Right ventricle myocardium inferior (tissue), 1 donor: ENCODE measurements at regions of chr3 and their contacts with region 1.

Region 1: DNA sequence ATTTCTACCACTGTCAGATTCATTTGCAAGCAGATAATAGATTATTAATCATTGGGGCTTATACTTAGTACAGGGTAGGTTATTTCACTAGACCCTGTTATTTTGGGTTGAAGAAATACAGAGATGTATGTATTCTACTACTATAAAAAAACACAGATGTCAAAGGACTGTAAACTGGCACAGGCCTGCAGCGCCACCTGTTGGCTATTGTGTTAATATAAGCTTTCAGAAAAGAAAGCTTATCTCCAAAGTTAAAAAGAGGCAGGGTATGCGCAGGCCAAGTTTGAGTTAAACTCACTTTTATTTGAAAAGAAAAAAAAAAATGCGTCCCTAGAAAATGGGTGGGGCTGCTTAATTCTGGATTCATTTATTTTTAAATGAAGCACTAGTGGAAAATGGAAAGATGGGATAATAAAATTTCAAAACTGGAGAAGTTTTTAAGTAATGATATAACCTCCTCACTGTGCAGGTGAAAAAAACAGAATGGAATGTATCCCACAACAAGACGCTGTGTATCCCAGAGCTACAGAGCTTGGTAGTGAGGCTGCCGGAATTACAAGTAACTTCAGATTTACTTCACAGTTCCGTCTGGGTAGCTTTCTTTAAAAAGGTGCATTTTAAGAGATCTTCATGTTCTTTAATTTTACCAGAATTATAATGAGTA is 407.2 kb upstream of the TGFBR2 start:
- DNase-seq: peak; percentile 91
- ATAC-seq: peak; percentile 58

Region 2: GRCh38 chr3:30112902-30113484 is 86.2 kb before region 1 on chr3:
- intact Hi-C with region 1: loop called (anchors 1 kb)
- DNase-seq: no peak
- ATAC-seq: no peak

Region 3: DNA sequence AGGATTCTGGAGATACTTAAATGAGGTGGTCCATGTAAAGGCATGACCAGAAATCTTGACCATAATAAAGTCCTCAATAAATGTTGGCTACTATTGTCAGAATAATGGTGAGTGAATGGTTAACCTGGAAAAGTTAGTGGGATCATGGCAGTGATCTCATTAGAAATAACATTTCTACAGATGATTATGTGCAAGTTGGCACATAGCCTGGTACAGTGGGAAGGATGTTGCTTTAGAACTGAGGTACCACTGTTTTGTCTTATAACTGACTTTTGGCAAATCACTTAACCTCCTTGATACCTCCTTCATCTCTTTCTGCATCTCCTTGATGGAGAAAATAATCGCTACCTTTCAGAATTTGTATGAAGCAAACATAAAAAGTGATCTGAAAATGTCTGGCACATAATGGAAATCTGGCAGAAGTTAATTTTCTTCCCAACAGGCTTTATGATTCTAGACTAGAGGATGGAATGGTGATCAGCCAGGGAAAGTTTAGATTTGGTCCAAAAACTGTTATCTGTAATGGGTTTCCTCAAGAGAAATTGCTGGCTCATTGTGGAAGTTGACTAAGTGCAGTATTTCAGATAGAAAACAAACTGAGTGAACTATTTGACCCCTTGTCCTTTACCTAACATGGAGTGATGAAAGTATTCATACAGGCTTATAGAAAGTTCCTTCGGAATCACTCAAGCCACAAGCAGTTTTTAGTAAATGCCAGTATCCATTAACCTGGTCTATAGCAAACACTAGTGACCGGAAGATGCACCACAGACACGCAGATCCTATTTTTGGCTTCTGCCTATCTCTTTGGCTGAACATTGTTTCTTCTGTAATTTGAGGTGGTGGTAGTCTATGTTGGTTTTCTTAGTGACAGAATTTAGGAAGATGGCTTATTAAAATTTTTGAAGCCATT is 42.4 kb before region 1 on chr3:
- intact Hi-C with region 1: loop called (anchors 5 kb)
- DNase-seq: no peak
- ATAC-seq: peak; percentile 48

Region 4: GRCh38 chr3:30606301-30607031 is 407.2 kb after region 1 on chr3 and contains the start of gene TGFBR2:
- intact Hi-C with region 1: loop called (anchors 5 kb)
- DNase-seq: peak; percentile 98
- ATAC-seq: peak; percentile 97
- total RNA-seq, gene TGFBR2: 186 TPM

Region 5: DNA sequence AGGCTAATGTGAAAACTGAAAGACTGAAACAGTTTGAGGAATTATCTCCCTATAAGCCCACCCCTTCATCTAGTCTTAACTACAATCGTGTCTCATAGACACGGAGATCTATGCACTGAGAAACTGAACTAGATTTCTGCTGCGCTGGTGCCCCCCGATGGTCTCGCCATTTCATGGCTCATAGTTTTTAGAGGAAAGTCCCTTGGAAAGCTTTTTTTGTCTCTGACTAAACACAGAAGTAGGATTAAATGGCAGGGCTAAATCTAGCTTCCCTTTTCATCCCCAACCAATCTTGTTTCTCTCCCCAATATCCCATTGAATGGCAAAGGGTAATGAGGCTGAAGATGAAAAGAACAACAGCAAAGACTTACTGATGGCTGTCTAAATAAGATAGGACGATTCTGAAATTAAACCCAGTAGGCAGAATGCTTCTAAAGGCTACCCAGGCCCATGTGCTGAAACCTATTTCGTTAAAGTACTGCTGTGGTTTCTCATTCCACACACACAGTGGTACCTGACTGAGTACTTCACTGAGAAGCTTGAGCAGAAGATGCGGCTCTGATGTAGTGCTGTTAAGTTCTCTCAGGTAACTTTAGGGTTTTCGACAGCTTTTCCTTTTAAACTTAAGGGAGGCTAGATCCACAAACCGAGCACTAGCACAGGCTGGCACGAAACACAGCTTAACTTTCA is 552.5 kb after region 1 on chr3:
- intact Hi-C with region 1: loop called (anchors 5 kb)
- DNase-seq: no peak
- ATAC-seq: peak; percentile 3